ENCODE measurements at regions of chr3 and their contacts with region 1.

Region 1: DNA sequence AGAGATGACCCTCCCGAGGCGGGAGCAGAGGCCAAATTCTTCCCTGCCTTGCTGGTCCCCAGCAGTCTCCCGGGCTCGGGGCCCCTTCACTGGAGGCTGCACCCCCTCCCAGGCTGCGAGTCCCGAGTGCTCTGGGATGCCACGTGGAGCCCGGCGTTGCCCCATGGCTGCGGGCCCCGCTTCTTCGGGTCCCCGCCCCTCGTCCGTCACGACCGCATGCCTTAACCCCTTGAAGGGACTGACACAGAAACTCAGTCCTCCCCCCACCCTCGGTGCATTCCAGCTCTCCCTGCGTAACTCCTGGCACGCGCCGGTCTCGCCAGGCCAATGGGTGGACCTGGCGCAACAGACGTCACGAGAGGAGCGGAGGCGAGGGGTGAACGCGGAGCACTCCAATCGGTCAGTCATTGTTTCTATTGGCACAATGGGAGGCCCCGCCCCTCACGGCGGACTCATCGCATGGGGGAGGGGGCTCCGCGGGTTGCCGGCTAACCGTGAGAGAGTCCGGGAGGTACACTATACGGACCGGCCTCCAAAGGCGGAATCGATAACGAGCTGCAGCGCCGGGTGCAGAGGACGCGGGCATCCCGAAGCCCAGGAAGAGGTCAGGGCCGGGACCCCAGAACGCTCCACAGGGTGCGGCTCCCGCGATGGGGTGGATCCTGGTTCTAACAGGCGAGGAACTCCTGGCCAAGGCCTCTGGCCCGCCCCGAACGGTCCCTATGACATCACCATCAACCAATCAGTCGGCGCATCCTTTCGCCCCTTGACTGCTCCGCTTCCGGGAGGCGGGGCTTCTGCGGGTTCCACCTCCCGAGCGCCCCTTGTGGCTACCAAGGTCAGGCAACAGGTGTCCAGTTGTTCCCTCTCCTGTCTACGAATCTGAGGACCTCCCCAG is 978 bp upstream of the CELSR3 start:
- DNase-seq: peak; percentile 99
- H3K4me3 Mint-ChIP-seq: peak overlapping the region; percentile 96
- H3K27ac Mint-ChIP-seq: peak overlapping the region; percentile 99
- H3K4me1 Mint-ChIP-seq: peaks cover 6% of the 10 kb centered on the region
- H3K27me3 Mint-ChIP-seq: no peaks in the 10 kb centered on the region
- CTCF ChIP-seq: peak; percentile 80

Region 2: GRCh38 chr3:48301020-48301796 is 362.5 kb before region 1 on chr3:
- CTCF ChIA-PET with region 1: no interaction called
- POLR2A ChIA-PET with region 1: no interaction called
- intact Hi-C with region 1: no loop called
- DNase-seq: peak; percentile 92
- H3K4me3 Mint-ChIP-seq: peak within 1 kb of the TSS; percentile 97
- H3K27ac Mint-ChIP-seq: peak within 1 kb of the TSS; percentile 99
- H3K4me1 Mint-ChIP-seq: peaks cover 24% of the 10 kb centered on the region
- H3K27me3 Mint-ChIP-seq: no peaks in the 10 kb centered on the region
- CTCF ChIP-seq: no peak

Region 3: GRCh38 chr3:48465531-48466378 is 197.9 kb before region 1 on chr3:
- CTCF ChIA-PET with region 1: no interaction called
- POLR2A ChIA-PET with region 1: no interaction called
- intact Hi-C with region 1: loop called (anchors 5 kb)
- DNase-seq: peak; percentile 99
- H3K4me3 Mint-ChIP-seq: peak overlapping the region; percentile 67
- H3K27ac Mint-ChIP-seq: peak overlapping the region; percentile 99
- H3K4me1 Mint-ChIP-seq: peaks cover 25% of the 10 kb centered on the region
- H3K27me3 Mint-ChIP-seq: no peaks in the 10 kb centered on the region
- CTCF ChIP-seq: peak; percentile 38

Region 4: DNA sequence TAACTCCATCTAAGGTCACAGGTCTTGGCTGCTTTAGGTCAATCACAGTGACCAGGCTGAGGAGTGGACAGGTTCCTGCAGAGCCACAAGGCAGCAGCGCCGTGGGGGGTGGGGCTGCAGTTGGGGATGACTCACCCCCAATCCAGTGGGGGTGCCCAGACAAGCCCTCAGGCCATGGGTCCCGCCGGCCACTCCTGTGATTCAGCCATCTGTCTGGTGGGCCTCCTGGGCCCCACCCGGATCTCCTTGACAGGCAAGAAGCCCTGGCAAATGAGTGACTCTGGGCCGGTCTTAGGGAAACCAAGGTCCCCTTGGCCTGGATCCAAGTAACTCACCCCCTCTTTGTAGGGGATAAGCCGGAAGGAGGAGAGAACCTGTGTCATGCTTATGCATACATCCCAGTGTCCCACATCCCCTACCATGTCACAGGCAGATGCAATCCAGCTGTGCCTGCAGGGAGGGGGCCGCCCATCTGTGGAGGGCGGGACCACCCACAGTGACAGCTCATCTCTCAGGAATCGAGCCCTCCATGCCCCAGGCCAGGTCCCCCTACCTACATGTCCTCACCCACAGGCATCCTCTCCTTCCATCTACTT is 68.0 kb before region 1 on chr3:
- CTCF ChIA-PET with region 1: interaction called, 7 read pairs
- POLR2A ChIA-PET with region 1: interaction called, 50 read pairs
- intact Hi-C with region 1: no loop called
- DNase-seq: peak; percentile 85
- H3K4me3 Mint-ChIP-seq: peak overlapping the region; percentile 48
- H3K27ac Mint-ChIP-seq: peak overlapping the region; percentile 68
- H3K4me1 Mint-ChIP-seq: peaks cover 51% of the 10 kb centered on the region
- H3K27me3 Mint-ChIP-seq: no peaks in the 10 kb centered on the region
- CTCF ChIP-seq: no peak

Region 5: DNA sequence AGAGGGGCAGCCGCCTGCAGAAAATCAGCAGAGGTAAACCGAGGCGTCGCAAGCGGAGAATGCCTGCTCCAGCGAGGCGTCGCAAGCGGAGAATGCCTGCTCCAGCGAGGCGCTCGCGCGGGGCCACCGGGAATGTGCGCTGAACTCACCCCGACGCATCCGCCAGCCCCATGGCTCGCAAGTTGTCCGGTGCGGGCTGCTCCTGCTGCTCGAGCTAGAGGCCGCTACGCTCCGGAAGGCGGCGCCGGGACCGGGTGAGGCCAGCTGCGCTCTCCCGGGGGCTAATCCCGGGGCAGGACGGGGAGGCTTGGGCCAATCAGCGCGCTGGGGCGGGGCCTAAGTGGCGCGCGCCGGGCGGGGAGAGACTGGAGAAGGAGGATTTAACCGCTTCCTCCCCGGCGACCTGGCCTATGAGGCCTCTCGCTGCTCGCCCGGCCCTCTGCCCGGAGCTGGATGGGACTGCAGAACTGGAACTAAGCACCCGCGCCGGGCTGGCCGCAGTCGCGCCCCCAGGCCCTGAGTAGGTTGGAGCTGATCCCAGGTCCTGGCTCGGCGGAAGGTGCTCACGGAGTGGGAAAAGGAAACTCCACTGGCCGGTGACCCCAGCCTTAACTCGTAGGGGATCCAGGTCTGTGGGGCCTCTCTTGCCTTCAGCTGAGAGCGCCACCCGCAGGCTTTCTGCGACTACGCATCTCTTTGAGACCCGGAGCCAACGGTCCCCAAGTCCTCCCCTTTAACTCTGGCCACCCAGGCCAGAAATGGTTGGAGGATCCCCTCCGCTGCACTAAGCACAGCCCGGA is 28.2 kb before region 1 on chr3 and contains the start of gene SLC26A6:
- CTCF ChIA-PET with region 1: interaction called, 16 read pairs
- POLR2A ChIA-PET with region 1: interaction called, 88 read pairs
- intact Hi-C with region 1: loop called (anchors 1 kb)
- DNase-seq: peak; percentile 98
- H3K4me3 Mint-ChIP-seq: peak within 1 kb of the TSS; percentile 84
- H3K27ac Mint-ChIP-seq: peak within 1 kb of the TSS; percentile 85
- H3K4me1 Mint-ChIP-seq: peaks cover 10% of the 10 kb centered on the region
- H3K27me3 Mint-ChIP-seq: no peaks in the 10 kb centered on the region
- CTCF ChIP-seq: peak; percentile 48
- total RNA-seq, gene SLC26A6: 47.4 and 63.3 TPM in 2 replicates

Region 6: DNA sequence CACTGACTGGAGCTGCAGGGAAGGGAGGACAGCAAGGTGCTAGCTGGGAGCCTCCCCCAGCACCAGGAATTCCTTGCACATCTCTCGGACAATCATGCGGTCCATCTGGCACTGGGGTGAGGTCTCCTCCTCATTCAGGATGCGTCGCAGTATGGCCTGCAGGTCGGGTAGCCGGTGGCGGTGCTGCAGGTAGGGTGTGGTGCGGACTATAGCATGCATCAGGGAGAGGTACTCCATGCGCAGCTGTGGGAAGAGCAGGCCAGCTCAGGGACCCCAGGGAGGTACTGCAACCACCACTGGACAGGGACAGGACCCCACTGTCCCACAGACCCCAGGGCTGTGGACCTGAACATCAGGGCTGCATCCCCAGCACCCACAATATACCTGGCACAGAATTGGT is 10.8 kb after region 1 on chr3:
- CTCF ChIA-PET with region 1: no interaction called
- POLR2A ChIA-PET with region 1: interaction called, 10 read pairs
- intact Hi-C with region 1: no loop called
- DNase-seq: no peak
- H3K4me3 Mint-ChIP-seq: no peak overlapping the region
- H3K27ac Mint-ChIP-seq: no peak overlapping the region
- H3K4me1 Mint-ChIP-seq: no peaks in the 10 kb centered on the region
- H3K27me3 Mint-ChIP-seq: no peaks in the 10 kb centered on the region
- CTCF ChIP-seq: no peak

Region 7: GRCh38 chr3:48708481-48708889 is 44.8 kb after region 1 on chr3:
- CTCF ChIA-PET with region 1: interaction called, 4 read pairs
- POLR2A ChIA-PET with region 1: interaction called, 11 read pairs
- intact Hi-C with region 1: no loop called
- DNase-seq: peak; percentile 72
- H3K4me3 Mint-ChIP-seq: peak overlapping the region; percentile 53
- H3K27ac Mint-ChIP-seq: peak overlapping the region; percentile 96
- H3K4me1 Mint-ChIP-seq: peaks cover 21% of the 10 kb centered on the region
- H3K27me3 Mint-ChIP-seq: no peaks in the 10 kb centered on the region
- CTCF ChIP-seq: no peak

Region 8: GRCh38 chr3:48847504-48848423 is 184.1 kb after region 1 on chr3 and contains the start of gene PRKAR2A:
- CTCF ChIA-PET with region 1: no interaction called
- POLR2A ChIA-PET with region 1: interaction called, 11 read pairs
- intact Hi-C with region 1: no loop called
- DNase-seq: peak; percentile 85
- H3K4me3 Mint-ChIP-seq: peak within 1 kb of the TSS; percentile 87
- H3K27ac Mint-ChIP-seq: peak within 1 kb of the TSS; percentile 93
- H3K4me1 Mint-ChIP-seq: peaks cover 13% of the 10 kb centered on the region
- H3K27me3 Mint-ChIP-seq: no peaks in the 10 kb centered on the region
- CTCF ChIP-seq: no peak
- total RNA-seq, gene PRKAR2A: 51.3 and 61.3 TPM in 2 replicates

Region 9: DNA sequence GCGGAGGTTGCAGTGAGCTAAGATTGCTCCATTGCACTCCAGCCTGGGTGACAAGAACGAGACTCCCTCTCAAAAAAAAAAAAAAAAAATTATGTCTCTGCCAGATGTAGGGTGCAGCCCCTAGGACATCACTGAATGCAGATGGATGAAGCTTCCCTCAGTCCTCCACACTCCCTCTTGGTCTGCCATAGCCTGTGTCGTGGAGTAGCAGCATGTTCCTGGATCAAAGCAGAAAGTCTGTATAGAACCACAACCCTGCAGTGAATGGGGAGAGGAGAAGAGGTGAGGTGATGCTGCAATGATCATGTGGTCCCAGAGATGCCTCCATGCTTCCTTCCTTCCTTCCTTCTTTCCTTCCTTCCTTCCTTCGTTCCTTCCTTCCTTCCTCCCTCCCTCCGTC is 484.5 kb after region 1 on chr3:
- CTCF ChIA-PET with region 1: no interaction called
- POLR2A ChIA-PET with region 1: no interaction called
- intact Hi-C with region 1: no loop called
- DNase-seq: no peak
- H3K4me3 Mint-ChIP-seq: no peak overlapping the region
- H3K27ac Mint-ChIP-seq: no peak overlapping the region
- H3K4me1 Mint-ChIP-seq: no peaks in the 10 kb centered on the region
- H3K27me3 Mint-ChIP-seq: no peaks in the 10 kb centered on the region
- CTCF ChIP-seq: no peak

Region 10: DNA sequence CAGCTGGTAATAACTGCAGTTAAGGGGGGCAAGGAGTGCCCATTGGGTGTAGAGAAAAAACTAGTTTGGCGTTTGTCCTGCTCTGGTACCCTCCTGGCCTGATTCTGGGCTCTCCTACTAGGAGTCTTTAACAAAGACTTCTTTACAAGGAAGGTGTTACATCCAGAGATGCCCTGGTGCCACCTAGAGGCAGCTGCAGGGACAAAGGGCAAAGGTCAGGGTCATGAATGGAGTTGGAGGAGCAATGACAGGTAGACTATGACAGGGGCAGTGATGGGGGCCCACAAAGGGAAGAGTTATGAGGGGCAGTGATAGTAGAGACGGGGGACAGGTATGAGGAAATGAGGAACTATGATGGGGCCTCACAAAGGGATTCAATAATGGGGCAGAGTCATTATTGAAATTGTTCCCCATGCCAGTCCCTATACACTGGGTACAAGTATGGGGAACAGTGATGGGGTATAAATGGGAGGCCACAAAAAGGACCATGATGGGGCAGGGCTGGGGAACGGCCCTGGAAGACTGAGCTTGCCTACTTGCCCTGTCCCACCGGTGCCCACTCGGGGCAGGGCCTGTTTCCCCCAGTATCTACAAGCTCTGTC is 494.5 kb after region 1 on chr3:
- CTCF ChIA-PET with region 1: no interaction called
- POLR2A ChIA-PET with region 1: no interaction called
- intact Hi-C with region 1: no loop called
- DNase-seq: peak; percentile 68
- H3K4me3 Mint-ChIP-seq: no peak overlapping the region
- H3K27ac Mint-ChIP-seq: no peak overlapping the region
- H3K4me1 Mint-ChIP-seq: no peaks in the 10 kb centered on the region
- H3K27me3 Mint-ChIP-seq: no peaks in the 10 kb centered on the region
- CTCF ChIP-seq: peak; percentile 53